CD8-positive, alpha-beta T cell (primary cell): ENCODE measurements at regions of chr20 and their contacts with region 1.

Region 1: GRCh38 chr20:58388882-58389323 is at the start of gene VAPB:
- DNase-seq: peak; percentile 94 to 99 (median 97)
- ATAC-seq: peak; percentile 95
- H3K4me3 ChIP-seq: peak within 1 kb of the TSS; percentile 87 to 90
- H3K4me3 Mint-ChIP-seq: peak within 1 kb of the TSS; percentile 88
- H3K27ac ChIP-seq: peak within 1 kb of the TSS; percentile 98 to 99
- H3K27ac Mint-ChIP-seq: peak within 1 kb of the TSS; percentile 96
- H3K4me1 ChIP-seq: peaks cover 43% of the 10 kb centered on the region
- H3K4me1 Mint-ChIP-seq: peaks cover 40% of the 10 kb centered on the region
- H3K27me3 ChIP-seq: peaks cover 0 to 2% of the 10 kb centered on the region in 2 experiments
- H3K27me3 Mint-ChIP-seq: peaks cover 4% of the 10 kb centered on the region
- CTCF ChIP-seq: no peak
- total RNA-seq, gene VAPB: 29.3 to 32.3 TPM

Region 2: GRCh38 chr20:58407966-58408557 is 19.2 kb after region 1 on chr20:
- CTCF ChIA-PET with region 1: no interaction called
- POLR2A ChIA-PET with region 1: interaction called, 6 read pairs
- intact Hi-C with region 1: loop called in 1 of 2 experiments (anchors 2 kb)
- DNase-seq: peak in 4 of 9 experiments; percentile 9 to 51 (median 30)
- ATAC-seq: peak; percentile 78
- H3K4me3 ChIP-seq: no peak overlapping the region
- H3K4me3 Mint-ChIP-seq: peak overlapping the region; percentile 54
- H3K27ac ChIP-seq: peak overlapping the region; percentile 12 to 20
- H3K27ac Mint-ChIP-seq: peak overlapping the region; percentile 89
- H3K4me1 ChIP-seq: peaks cover 30% of the 10 kb centered on the region
- H3K4me1 Mint-ChIP-seq: peaks cover 42% of the 10 kb centered on the region
- H3K27me3 ChIP-seq: no peaks in the 10 kb centered on the region
- H3K27me3 Mint-ChIP-seq: no peaks in the 10 kb centered on the region
- CTCF ChIP-seq: no peak